ENCODE measurements at regions of chr17 and their contacts with region 1.

Region 1: GRCh38 chr17:7650509-7651096 is at the start of gene ATP1B2:
- H3K4me3 ChIP-seq: peak within 1 kb of the TSS; percentile 38
- H3K27ac ChIP-seq: peak within 1 kb of the TSS; percentile 39; the same call in 1 of the 2 replicates
- H3K4me1 ChIP-seq: peaks cover 5% of the 10 kb centered on the region
- CTCF ChIP-seq: no peak

Region 2: GRCh38 chr17:7627250-7628121 is 23.1 kb before region 1 on chr17 and contains the start of gene SAT2:
- CTCF ChIA-PET with region 1: interaction called, 57 read pairs
- POLR2A ChIA-PET with region 1: interaction called, 22 read pairs
- H3K4me3 ChIP-seq: peak within 1 kb of the TSS; percentile 84
- H3K27ac ChIP-seq: peak within 1 kb of the TSS; percentile 91
- H3K4me1 ChIP-seq: peaks cover 3% of the 10 kb centered on the region; the same call in 1 of the 2 replicates
- CTCF ChIP-seq: no peak